ENCODE measurements at regions of chr2 and their contacts with region 1.

Region 1: DNA sequence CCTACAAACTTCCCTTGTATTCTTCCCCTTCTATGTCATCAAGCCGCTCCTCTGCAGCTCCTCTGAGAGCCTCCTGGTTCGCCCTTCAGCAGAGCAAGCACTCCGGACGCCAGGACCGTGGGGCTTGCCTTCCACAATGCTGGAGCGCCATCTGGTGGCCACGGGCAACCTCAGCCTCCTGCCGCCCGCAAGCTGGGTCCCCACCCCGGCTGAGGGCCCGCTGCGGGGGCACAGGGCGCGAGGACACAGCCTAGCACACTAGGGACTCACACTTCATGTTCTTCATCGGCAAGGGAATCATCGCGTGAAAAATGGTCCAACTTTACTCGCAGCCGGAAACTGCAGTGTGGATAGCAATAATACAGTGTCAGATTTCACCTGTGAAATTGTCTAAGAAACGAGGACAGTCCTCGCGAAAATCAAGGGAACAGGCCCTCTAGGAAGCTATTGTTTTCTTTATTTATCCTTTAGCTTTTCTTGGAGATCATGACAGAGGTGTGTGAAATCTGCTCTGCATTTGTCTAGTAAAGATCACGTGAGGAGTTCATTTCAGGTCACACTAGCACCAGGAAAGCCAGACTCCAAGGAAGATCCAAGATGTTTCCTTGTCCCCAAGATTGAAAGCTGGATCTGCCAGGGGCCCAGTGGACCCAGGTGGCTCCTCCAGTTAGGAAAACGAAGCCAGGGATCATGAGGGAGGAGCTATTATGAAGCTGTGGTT is 5.8 kb downstream of the PRLH start:
- DNase-seq: peak; percentile 34
- ATAC-seq: peak; percentile 99
- H3K4me3 ChIP-seq: no peak overlapping the region
- H3K27ac ChIP-seq: no peak overlapping the region
- H3K4me1 ChIP-seq: no peaks in the 10 kb centered on the region
- H3K27me3 ChIP-seq: peaks cover 0 to 2% of the 10 kb centered on the region in 2 experiments; a peak in 1 of 4 replicates
- CTCF ChIP-seq: peak; percentile 94 to 99 (median 95); a peak in 5 of 6 replicates
- EP300 ChIP-seq: no peak
- POLR2A ChIP-seq: no peak
- RAD21 ChIP-seq: peak; percentile 99

Region 2: DNA sequence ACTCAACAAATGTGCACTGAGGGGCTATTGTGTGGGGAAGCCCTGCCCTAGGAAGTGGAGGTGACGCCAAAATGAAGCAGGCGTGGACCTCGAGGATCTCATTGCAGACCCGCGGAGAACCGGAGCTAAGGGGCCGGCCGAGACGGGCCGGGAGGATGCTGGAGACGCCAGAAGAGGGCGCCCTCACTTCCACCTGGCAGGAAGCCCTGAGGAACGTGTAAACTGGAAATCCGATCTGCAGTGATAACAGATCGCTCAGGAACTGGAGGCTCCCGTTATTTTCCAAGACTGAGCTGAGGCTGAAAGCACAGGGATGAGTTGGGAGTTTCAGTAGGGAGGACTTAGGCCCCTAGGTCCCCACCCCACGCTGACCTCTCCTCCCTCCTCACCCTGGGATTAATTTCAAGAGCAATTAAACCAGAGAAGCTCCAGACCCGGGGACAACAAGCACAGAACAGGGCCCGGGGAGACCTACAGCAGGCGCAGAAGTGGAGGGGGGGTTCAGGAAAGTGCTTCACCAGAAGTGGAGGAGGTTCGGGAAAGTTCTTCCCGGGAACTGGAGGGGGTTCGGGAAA is 150.6 kb before region 1 on chr2:
- CTCF ChIA-PET with region 1: interaction called, 19 read pairs
- POLR2A ChIA-PET with region 1: no interaction called
- RAD21 ChIA-PET with region 1: no interaction called
- SMC1A ChIA-PET with region 1: interaction called, 5 read pairs
- in situ Hi-C with region 1: no loop called
- intact Hi-C with region 1: loop called (anchors 5 kb)
- DNase-seq: no peak
- ATAC-seq: peak; percentile 83
- H3K4me3 ChIP-seq: no peak overlapping the region
- H3K27ac ChIP-seq: no peak overlapping the region
- H3K4me1 ChIP-seq: no peaks in the 10 kb centered on the region
- H3K27me3 ChIP-seq: peaks cover 0 to 2% of the 10 kb centered on the region in 2 experiments; a peak in 3 of 4 replicates
- CTCF ChIP-seq: peak; percentile 63 to 84 (median 70)
- EP300 ChIP-seq: no peak
- POLR2A ChIP-seq: no peak
- RAD21 ChIP-seq: peak; percentile 56

Region 3: GRCh38 chr2:237524631-237525030 is 47.5 kb before region 1 on chr2:
- CTCF ChIA-PET with region 1: interaction called, 14 read pairs
- POLR2A ChIA-PET with region 1: interaction called, 3 read pairs
- RAD21 ChIA-PET with region 1: interaction called, 5 read pairs
- SMC1A ChIA-PET with region 1: interaction called, 6 read pairs
- in situ Hi-C with region 1: no loop called
- intact Hi-C with region 1: no loop called
- DNase-seq: no peak
- ATAC-seq: no peak
- H3K4me3 ChIP-seq: no peak overlapping the region
- H3K27ac ChIP-seq: no peak overlapping the region
- H3K4me1 ChIP-seq: peaks cover 12% of the 10 kb centered on the region
- H3K27me3 ChIP-seq: no peaks in the 10 kb centered on the region
- CTCF ChIP-seq: no peak
- EP300 ChIP-seq: no peak
- POLR2A ChIP-seq: no peak
- RAD21 ChIP-seq: no peak

Region 4: GRCh38 chr2:237549643-237550415 is 22.4 kb before region 1 on chr2:
- CTCF ChIA-PET with region 1: interaction called, 38 read pairs
- POLR2A ChIA-PET with region 1: no interaction called
- RAD21 ChIA-PET with region 1: interaction called, 3 read pairs
- SMC1A ChIA-PET with region 1: interaction called, 44 read pairs
- in situ Hi-C with region 1: no loop called
- intact Hi-C with region 1: no loop called
- DNase-seq: no peak
- ATAC-seq: no peak
- H3K4me3 ChIP-seq: no peak overlapping the region
- H3K27ac ChIP-seq: no peak overlapping the region
- H3K4me1 ChIP-seq: no peaks in the 10 kb centered on the region
- H3K27me3 ChIP-seq: peaks cover 0 to 1% of the 10 kb centered on the region in 2 experiments; a peak in 1 of 4 replicates
- CTCF ChIP-seq: no peak
- EP300 ChIP-seq: no peak
- POLR2A ChIP-seq: no peak
- RAD21 ChIP-seq: no peak

Region 5: GRCh38 chr2:237733677-237734300 is 161.6 kb after region 1 on chr2:
- CTCF ChIA-PET with region 1: no interaction called
- POLR2A ChIA-PET with region 1: no interaction called
- RAD21 ChIA-PET with region 1: no interaction called
- SMC1A ChIA-PET with region 1: no interaction called
- in situ Hi-C with region 1: no loop called
- intact Hi-C with region 1: no loop called
- DNase-seq: no peak
- ATAC-seq: no peak
- H3K4me3 ChIP-seq: no peak overlapping the region
- H3K27ac ChIP-seq: no peak overlapping the region
- H3K4me1 ChIP-seq: no peaks in the 10 kb centered on the region
- H3K27me3 ChIP-seq: no peaks in the 10 kb centered on the region
- CTCF ChIP-seq: no peak
- EP300 ChIP-seq: no peak
- POLR2A ChIP-seq: no peak
- RAD21 ChIP-seq: no peak

Region 6: DNA sequence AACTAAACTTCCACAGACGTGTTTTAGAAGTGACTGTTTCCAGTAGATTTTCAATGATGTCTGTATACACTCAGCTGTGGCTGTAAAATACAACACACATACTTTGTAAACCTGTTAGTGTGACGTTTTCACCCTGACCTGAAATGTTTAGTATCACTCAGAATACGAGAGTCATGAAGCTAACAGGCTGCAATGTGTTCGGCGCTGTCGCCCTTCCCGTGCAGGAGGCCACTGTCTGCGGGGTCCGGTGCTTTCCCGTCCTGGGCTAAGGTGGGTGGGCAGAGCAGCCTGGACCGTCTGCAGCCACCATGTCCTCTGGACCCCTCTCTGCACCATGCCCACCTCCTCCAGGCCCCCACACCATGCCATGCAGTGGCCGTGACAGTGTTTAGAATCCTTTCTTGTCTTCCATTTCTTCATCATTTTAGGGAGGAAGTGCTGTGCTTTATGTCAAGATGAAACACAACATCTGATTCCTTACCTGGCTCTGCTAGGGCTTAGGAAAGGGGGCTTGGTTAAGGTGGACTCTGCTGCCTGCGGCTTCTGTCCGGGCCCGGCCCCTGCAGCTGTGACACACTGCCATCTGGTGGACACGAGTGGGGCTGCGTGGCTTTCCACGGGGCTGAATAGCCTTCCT is 172.6 kb after region 1 on chr2:
- CTCF ChIA-PET with region 1: interaction called, 11 read pairs
- POLR2A ChIA-PET with region 1: no interaction called
- RAD21 ChIA-PET with region 1: interaction called, 18 read pairs
- SMC1A ChIA-PET with region 1: interaction called, 9 read pairs
- in situ Hi-C with region 1: no loop called
- intact Hi-C with region 1: no loop called
- DNase-seq: no peak
- ATAC-seq: peak; percentile 97
- H3K4me3 ChIP-seq: no peak overlapping the region
- H3K27ac ChIP-seq: no peak overlapping the region
- H3K4me1 ChIP-seq: no peaks in the 10 kb centered on the region
- H3K27me3 ChIP-seq: no peaks in the 10 kb centered on the region
- CTCF ChIP-seq: peak; percentile 93 to 97 (median 95)
- EP300 ChIP-seq: no peak
- POLR2A ChIP-seq: peak; percentile 53
- RAD21 ChIP-seq: peak; percentile 93

Measured in GM12878 (cell line).